MCF 10A (cell line): ENCODE measurements at regions of chr18 and their contacts with region 1.

Region 1: DNA sequence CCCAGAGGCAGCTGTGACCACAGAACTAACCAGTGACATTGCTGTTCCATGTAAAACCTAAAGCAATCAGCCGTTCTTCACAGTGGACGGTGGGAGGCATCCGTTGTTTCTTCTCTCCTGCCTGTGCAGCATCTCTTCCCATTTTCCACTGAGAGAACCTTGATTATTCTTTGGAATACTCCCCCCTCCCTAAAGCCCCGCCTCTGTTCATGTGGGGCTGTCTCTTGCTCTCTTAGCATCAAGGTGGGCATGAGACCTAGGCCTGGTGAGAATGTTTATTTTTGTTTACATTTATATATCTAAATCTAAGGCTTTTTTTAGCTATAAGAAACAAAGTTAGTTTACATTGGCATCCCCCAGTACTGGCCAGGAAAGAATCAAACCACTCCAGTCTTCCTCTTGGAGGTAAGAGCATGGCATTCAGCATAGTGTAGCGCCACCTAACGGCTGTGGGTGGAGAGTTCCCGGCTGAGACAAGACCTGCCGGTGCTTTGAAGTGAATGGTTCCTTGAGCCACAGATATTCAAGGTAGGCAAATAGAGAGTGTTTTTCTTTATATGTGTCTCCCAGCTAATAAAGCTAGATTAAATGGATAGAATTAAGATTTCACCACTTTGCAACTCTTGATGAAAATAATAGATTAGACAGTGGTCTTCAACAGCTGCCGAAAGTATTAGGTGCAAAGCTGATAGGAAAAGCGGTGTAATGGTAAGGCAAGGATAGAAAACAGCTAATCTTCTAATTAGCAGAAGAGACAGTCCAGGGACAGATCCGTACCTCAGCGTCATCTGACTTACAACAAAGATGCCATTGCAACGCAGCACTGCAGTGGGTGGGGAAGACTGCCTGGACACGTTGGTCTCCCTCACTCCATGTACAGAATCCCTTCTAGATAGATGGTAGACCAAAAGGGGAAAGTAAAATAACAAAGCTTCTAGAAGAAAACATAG is 219.6 kb upstream of the RAB12 start:
- DNase-seq: peak; percentile 77
- H3K4me3 Mint-ChIP-seq: no peak overlapping the region
- H3K27ac Mint-ChIP-seq: peak overlapping the region; percentile 10
- H3K4me1 Mint-ChIP-seq: no peaks in the 10 kb centered on the region
- H3K27me3 Mint-ChIP-seq: no peaks in the 10 kb centered on the region
- CTCF ChIP-seq: peak; percentile 87

Region 2: GRCh38 chr18:7221424-7222155 is 1168.1 kb before region 1 on chr18:
- CTCF ChIA-PET with region 1: interaction called, 3 read pairs
- POLR2A ChIA-PET with region 1: no interaction called
- intact Hi-C with region 1: loop called (anchors 2 kb)
- DNase-seq: peak; percentile 80
- H3K4me3 Mint-ChIP-seq: no peak overlapping the region
- H3K27ac Mint-ChIP-seq: no peak overlapping the region
- H3K4me1 Mint-ChIP-seq: no peaks in the 10 kb centered on the region
- H3K27me3 Mint-ChIP-seq: peaks cover 25% of the 10 kb centered on the region
- CTCF ChIP-seq: peak; percentile 83

Region 3: DNA sequence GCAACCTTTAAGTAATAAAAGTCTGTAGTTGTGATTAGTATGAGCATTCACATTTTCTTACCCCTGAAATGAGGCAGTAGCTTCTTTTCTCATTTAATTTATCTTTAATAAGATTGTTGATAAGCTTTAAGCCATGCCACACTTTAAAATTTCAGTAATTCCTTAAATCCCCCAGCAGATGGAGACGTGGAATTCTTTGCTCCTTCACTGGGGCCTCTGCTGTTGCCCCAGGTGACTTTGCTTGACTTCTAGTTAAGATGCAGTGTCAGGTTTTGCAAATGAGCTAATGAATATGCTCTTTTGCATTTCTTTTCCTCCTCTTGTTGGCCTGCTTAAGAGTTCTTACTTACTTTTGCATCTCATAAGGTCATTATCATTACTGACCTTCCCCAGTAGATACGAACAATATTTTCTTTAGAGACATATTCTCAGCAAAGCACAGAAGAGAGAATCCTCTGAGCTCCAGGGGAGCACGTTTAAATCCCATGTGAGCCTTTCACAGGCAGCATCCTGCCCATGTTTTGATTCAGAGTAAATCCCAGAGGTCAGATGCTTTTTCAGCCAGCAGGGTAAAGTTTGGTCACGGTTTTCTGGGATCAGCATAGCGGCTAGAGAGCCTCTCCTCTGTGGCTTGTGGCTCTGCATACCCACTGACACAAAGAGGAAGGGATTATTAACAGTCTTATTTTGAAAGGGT is 599.7 kb before region 1 on chr18:
- CTCF ChIA-PET with region 1: interaction called, 18 read pairs
- POLR2A ChIA-PET with region 1: no interaction called
- intact Hi-C with region 1: loop called (anchors 1 kb)
- DNase-seq: peak; percentile 68
- H3K4me3 Mint-ChIP-seq: no peak overlapping the region
- H3K27ac Mint-ChIP-seq: no peak overlapping the region
- H3K4me1 Mint-ChIP-seq: peaks cover 12% of the 10 kb centered on the region
- H3K27me3 Mint-ChIP-seq: no peaks in the 10 kb centered on the region
- CTCF ChIP-seq: peak; percentile 41

Region 4: GRCh38 chr18:8084160-8084559 is 305.5 kb before region 1 on chr18:
- CTCF ChIA-PET with region 1: interaction called, 4 read pairs
- POLR2A ChIA-PET with region 1: no interaction called
- intact Hi-C with region 1: loop called (anchors 2 kb)
- DNase-seq: peak; percentile 71
- H3K4me3 Mint-ChIP-seq: no peak overlapping the region
- H3K27ac Mint-ChIP-seq: no peak overlapping the region
- H3K4me1 Mint-ChIP-seq: no peaks in the 10 kb centered on the region
- H3K27me3 Mint-ChIP-seq: no peaks in the 10 kb centered on the region
- CTCF ChIP-seq: peak; percentile 59

Region 5: DNA sequence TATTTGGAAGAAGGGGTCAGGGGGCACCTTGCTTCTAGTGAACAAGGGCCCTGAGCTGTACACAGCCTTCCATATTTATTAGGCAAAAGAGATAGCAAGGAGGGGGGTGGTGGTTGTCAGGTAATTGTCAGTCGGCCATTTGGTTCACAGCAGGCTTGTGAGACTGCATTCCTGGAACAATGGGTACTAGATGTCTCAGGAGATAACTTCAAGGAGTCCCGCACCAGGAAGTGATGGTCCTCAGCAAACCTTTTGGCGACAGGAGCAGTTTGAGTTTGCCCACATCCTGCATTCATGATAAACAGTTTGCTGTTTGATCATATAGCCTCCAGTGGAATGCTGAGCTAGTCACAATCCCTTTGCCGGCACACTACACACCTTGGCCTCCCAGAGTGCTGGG is 156.9 kb before region 1 on chr18:
- CTCF ChIA-PET with region 1: no interaction called
- POLR2A ChIA-PET with region 1: no interaction called
- intact Hi-C with region 1: no loop called
- DNase-seq: no peak
- H3K4me3 Mint-ChIP-seq: no peak overlapping the region
- H3K27ac Mint-ChIP-seq: no peak overlapping the region
- H3K4me1 Mint-ChIP-seq: peaks cover 8% of the 10 kb centered on the region
- H3K27me3 Mint-ChIP-seq: no peaks in the 10 kb centered on the region
- CTCF ChIP-seq: no peak

Region 6: DNA sequence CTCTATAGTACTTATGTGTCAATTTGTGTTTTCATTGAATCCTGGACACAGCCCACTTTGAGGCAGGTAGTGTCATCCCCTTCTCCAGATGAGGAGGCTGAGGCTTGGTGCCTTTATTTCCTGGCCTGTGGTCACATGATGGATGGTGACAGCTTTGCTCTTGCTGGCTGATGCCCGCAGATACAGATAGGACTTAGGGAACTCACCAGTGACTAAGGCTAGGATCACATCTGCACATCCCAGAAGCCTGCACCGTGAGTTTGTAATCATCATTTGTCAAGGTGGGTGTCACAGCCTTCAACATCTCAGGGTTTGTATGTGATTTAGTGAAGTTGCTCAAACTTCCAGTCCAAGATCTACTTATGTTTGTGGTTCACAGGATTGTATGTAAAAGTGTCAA is 75.5 kb before region 1 on chr18:
- CTCF ChIA-PET with region 1: no interaction called
- POLR2A ChIA-PET with region 1: no interaction called
- intact Hi-C with region 1: no loop called
- DNase-seq: no peak
- H3K4me3 Mint-ChIP-seq: no peak overlapping the region
- H3K27ac Mint-ChIP-seq: no peak overlapping the region
- H3K4me1 Mint-ChIP-seq: no peaks in the 10 kb centered on the region
- H3K27me3 Mint-ChIP-seq: no peaks in the 10 kb centered on the region
- CTCF ChIP-seq: no peak

Region 7: DNA sequence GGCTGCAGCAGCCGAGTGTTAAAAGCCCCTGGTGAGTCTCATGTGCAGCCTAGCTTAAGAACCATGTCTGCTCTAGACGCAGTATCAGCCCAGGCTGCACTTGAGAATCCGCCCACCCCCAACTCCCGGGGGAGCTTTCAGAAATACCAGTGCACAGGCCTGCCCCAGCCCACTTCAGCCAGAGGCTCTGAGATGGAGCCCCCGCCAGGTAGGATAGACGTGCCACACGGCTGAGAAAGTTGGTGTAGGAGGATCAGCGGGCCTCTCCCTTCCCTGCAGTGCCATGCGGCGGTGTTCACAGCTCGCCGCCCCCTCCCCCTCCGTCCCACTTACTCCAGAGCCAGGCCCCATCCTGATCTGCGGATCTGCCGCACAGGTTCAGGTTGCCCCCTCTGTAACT is 10.6 kb after region 1 on chr18:
- CTCF ChIA-PET with region 1: interaction called, 23 read pairs
- POLR2A ChIA-PET with region 1: no interaction called
- intact Hi-C with region 1: no loop called
- DNase-seq: no peak
- H3K4me3 Mint-ChIP-seq: no peak overlapping the region
- H3K27ac Mint-ChIP-seq: no peak overlapping the region
- H3K4me1 Mint-ChIP-seq: no peaks in the 10 kb centered on the region
- H3K27me3 Mint-ChIP-seq: no peaks in the 10 kb centered on the region
- CTCF ChIP-seq: no peak

Region 8: GRCh38 chr18:8450013-8450412 is 60.3 kb after region 1 on chr18:
- CTCF ChIA-PET with region 1: no interaction called
- POLR2A ChIA-PET with region 1: no interaction called
- intact Hi-C with region 1: no loop called
- DNase-seq: peak; percentile 47
- H3K4me3 Mint-ChIP-seq: no peak overlapping the region
- H3K27ac Mint-ChIP-seq: no peak overlapping the region
- H3K4me1 Mint-ChIP-seq: peaks cover 6% of the 10 kb centered on the region
- H3K27me3 Mint-ChIP-seq: no peaks in the 10 kb centered on the region
- CTCF ChIP-seq: peak; percentile 22